ENCODE measurements at regions of chr19 and their contacts with region 1.

Region 1: GRCh38 chr19:892243-893050 is 540 bp downstream of the MED16 start:
- DNase-seq: peak in 1 of 2 donors; percentile 52
- ATAC-seq: peak in 7 of 8 donors; percentile 2 to 71 (median 63)
- H3K4me3 ChIP-seq: peak overlapping the region; percentile 67 to 92 (median 80)
- H3K27ac ChIP-seq: peak overlapping the region; percentile 87 to 97 (median 94)
- H3K4me1 ChIP-seq: peaks cover 0 to 19% (median 9%) of the 10 kb centered on the region in 9 donors
- H3K27me3 ChIP-seq: no peaks in the 10 kb centered on the region
- CTCF ChIP-seq: no peak

Region 2: DNA sequence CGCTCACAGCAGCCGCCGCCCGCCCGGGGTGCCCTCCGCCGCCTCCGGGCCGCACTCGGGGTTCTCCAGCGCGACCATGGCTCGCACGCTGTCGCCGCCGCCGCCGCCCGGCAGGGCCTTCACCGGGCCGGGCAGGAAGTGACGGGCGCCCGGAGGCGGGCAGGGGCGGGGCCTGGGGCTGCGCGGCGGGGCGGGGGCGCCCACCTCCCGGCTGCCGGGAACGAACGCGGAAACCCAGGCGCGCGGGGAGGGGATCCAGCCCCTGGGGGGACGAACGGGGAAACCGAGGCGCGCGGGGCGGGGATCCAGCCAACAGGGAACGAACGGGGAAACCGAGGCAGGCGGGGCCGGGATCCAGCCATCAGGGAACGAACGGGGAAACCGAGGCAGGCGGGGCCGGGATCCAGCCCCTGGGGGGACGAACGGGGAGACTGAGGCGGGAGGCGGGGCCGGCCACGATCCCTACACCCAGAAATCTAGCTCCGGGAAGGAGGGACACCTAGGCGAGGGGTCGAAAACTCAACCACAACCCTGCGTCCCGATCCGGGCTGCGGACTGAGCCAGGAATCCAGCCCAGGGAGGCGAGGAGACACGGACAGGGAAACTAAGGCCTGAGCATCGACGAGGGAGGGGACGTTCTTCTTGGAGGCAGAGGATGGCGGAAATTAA is 20.8 kb after region 1 on chr19 and contains the start of gene R3HDM4:
- intact Hi-C with region 1: loop called in 1 of 10 experiments (anchors 1 kb)
- DNase-seq: peak; percentile 82 to 85
- ATAC-seq: peak; percentile 88 to 95 (median 92)
- H3K4me3 ChIP-seq: peak within 1 kb of the TSS; percentile 70 to 99 (median 88)
- H3K27ac ChIP-seq: peak within 1 kb of the TSS; percentile 70 to 99 (median 92)
- H3K4me1 ChIP-seq: peaks cover 13 to 59% (median 22%) of the 10 kb centered on the region in 9 donors
- H3K27me3 ChIP-seq: peaks cover 11 to 24% (median 22%) of the 10 kb centered on the region in 7 donors
- CTCF ChIP-seq: no peak
- total RNA-seq, gene R3HDM4: 16.3 to 30.6 (median 19.9) TPM

Measured in heart right ventricle (tissue), 16 donors.